ENCODE measurements at regions of chr15 and their contacts with region 1.

Region 1: DNA sequence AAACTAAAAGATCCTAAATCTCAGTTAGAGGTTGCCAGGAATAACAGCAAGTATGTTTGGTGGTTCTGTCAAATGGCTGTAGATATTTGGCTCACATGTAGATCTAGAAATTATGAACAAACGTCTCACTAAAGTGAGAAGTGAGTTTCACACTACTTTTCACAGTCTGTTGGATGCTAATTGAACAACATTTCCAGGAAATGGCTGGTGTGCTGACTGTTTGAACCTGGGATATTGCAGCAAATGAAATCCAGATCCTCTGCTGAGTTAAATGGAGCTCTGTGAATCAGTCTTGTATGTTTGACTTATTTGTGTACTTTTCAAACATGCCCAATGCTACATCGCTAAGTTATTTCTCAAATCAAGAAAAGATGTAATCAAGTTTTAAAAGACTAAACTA is 21.3 kb upstream of the RSL24D1 start:
- DNase-seq: no peak
- H3K4me3 Mint-ChIP-seq: no peak overlapping the region
- H3K27ac Mint-ChIP-seq: no peak overlapping the region
- H3K4me1 Mint-ChIP-seq: peaks cover 57% of the 10 kb centered on the region
- H3K27me3 Mint-ChIP-seq: no peaks in the 10 kb centered on the region

Region 2: DNA sequence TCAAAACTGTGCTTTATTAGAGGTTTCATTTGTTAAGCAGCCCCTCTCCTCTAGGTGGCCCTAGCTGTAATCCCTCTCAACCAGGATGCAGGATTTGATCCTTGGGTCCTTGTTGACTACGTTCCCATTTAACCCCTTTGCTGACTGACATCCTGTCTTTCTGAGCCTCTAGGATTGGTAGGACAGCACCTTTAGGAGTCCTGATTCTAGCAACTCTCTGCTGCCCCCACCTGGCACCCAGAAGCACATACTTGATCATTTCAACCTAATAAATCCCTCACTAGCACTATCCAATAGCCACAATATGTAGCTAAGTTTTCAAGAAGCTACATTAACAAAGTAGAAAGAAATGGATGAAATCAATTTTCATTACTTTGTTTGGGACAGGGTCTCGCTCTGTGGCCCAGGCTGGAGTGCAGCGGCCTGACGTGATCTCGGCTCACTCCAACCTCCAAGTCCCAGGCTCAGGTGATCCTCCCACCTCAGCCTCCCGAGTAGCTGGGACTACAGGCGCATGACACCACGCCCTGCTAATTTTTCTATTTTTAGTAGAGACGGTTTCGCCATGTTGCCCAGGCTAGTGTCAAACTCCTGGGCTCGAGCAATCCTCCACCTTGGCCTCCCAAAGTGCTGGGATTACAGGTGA is 49.6 kb before region 1 on chr15:
- CTCF ChIA-PET with region 1: no interaction called
- POLR2A ChIA-PET with region 1: no interaction called
- DNase-seq: peak; percentile 55
- H3K4me3 Mint-ChIP-seq: no peak overlapping the region
- H3K27ac Mint-ChIP-seq: no peak overlapping the region
- H3K4me1 Mint-ChIP-seq: peaks cover 2% of the 10 kb centered on the region
- H3K27me3 Mint-ChIP-seq: no peaks in the 10 kb centered on the region

Region 3: DNA sequence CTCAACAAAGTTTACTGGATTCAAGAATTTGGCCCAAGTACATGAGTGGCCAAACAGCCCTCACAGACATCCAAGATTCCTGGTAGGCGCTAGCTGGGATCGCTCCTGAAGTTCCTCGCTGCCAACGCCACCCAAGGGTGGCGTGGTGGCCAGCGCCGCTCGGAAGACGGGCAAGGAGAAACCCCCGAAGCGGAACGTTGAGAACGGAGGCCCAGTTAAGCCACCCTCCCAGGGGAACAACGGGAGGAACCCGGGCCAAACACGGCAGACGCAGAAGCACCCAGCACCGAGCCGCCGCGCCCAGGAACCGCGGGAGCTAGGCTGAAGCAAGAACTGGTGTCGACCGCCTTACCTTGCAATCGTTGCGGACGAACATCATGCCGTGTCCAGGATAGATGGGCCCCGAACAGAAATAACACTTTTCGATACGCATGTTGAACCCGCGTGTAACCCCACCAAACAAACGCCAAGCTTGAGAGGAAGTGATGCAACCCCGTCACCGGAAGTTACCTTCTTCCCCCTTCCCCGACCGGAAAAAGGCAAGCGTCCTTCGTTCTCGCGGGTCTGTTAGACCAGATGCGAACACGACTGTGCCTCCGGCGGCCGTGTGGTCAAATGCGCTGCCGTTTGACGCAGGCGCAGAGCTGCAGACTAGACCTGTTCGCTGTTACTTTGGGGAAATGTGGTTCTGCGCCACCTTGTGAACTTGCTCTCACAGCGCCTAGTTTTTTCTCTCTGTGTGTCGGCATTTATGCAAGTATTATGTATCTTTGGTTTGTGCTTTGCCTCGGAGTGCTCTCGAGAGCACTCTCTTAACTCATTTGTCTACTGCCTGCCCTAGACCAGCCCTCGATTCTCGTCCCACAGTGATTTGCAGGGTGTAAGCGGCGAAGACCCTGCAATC is 21.3 kb before region 1 on chr15 and contains the start of gene RSL24D1:
- CTCF ChIA-PET with region 1: interaction called, 11 read pairs
- POLR2A ChIA-PET with region 1: no interaction called
- DNase-seq: peak; percentile 98
- H3K4me3 Mint-ChIP-seq: no peak within 1 kb of the TSS
- H3K27ac Mint-ChIP-seq: no peak within 1 kb of the TSS
- H3K4me1 Mint-ChIP-seq: peaks cover 30% of the 10 kb centered on the region
- H3K27me3 Mint-ChIP-seq: no peaks in the 10 kb centered on the region
- total RNA-seq, gene RSL24D1: 78.6 to 81.2 TPM

Region 4: GRCh38 chr15:55276324-55276723 is 58.3 kb after region 1 on chr15:
- CTCF ChIA-PET with region 1: no interaction called
- POLR2A ChIA-PET with region 1: no interaction called
- DNase-seq: no peak
- H3K4me3 Mint-ChIP-seq: peak overlapping the region; percentile 62
- H3K27ac Mint-ChIP-seq: peak overlapping the region; percentile 94
- H3K4me1 Mint-ChIP-seq: peaks cover 82% of the 10 kb centered on the region
- H3K27me3 Mint-ChIP-seq: no peaks in the 10 kb centered on the region

Region 5: DNA sequence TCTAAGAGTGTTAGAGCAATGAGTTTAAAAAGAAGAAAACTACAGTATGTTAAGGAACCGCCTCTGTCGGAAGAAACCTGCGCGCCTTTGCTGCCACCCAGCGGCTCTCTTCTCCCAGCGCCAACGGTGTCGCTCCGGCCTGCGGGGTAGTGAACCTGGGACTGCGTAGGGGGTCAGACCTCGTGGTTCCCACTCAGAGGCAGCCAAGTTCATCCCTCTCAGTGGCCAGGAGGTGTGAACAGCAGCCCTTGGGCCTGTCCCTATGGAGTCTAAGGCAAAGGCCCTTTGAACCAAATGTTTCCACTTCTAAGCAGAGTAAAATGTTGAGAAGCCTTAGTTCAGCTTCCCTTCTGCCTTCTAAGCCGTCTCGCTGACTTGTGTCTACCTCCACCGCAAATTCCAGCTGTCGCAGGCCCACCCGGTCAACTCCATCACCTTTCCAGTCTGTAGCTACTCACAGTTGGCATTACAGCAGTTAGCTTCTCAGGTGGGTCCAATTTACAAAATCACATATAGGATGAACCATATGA is 72.5 kb after region 1 on chr15:
- CTCF ChIA-PET with region 1: interaction called, 18 read pairs
- POLR2A ChIA-PET with region 1: no interaction called
- DNase-seq: peak; percentile 86
- H3K4me3 Mint-ChIP-seq: peak overlapping the region; percentile 93
- H3K27ac Mint-ChIP-seq: peak overlapping the region; percentile 91
- H3K4me1 Mint-ChIP-seq: peaks cover 34% of the 10 kb centered on the region
- H3K27me3 Mint-ChIP-seq: no peaks in the 10 kb centered on the region